ENCODE measurements at regions of chr2 and their contacts with region 1.

Region 1: DNA sequence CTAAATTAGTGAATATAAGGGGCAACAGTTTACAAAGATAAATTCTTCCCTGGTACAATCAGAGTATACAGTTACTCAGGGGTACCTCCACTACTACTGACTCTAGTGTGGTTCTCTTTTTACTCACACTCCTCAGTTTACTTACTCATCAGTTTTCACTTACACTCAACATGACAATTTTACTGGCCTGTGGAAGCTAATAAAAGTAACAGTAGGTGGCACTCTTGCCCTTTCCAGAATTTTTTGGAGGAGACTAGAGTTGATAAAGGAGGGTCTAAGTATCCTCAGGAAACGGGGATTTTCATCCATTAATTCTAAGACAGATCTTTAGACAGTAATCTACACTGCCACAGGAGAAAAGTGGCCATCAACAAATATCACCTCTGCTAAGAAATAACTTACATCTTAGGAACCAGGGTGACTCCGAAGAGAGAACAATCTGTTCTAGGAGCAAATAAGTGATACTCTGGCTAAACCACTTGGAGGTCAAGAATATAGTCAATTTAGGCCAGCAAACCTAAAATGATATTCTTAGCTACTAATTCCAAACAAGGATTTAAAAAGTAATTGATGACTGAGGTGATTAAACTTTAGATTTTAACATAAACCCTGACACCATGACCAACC is 61.3 kb downstream of the ATL2 start:
- DNase-seq: peak; percentile 23 to 55
- H3K4me3 ChIP-seq: no peak overlapping the region
- H3K27ac ChIP-seq: 0 out of 2 replicates have a peak overlapping the region, but pooled peaks have one; percentile 1
- H3K4me1 ChIP-seq: no peaks in the 10 kb centered on the region
- H3K27me3 ChIP-seq: no peaks in the 10 kb centered on the region
- CTCF ChIP-seq: peak; percentile 90

Region 2: DNA sequence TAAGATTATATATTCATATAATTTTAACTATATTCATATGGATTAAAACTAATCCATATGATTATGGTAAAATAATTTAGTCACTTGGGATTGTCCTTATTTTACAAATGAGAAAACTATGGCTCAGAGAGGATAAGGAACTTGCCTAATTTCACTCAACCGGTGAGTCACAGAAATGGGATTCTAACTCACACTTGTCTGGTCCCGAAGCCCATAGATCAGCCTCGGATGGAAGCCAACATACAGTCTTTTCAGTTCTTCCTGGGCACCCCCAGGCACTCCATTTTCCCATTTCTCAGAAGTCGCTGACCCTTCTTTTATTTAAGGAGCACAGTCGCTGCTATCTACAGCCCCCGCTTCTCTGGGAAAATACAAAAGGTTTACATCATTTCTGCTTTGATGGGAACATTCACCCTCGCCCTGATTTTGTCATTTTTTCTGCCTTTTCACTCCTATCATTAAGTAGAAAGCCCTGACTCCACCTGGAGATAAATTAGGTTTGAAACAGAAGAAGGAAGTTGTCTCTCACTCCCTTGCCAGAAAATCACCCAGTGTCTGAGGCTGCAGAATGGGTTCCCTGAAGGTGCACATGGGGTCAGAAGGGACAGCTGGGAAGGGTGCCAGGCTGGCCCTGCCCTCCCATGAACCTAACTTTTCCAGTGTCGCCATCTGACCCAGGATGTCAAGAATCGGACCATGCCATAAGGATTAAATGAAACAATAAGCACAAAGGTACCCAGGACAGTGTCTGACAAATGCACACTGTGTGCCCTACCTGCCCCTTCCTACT is 276.5 kb before region 1 on chr2:
- CTCF ChIA-PET with region 1: no interaction called
- POLR2A ChIA-PET with region 1: no interaction called
- intact Hi-C with region 1: no loop called
- DNase-seq: no peak
- H3K4me3 ChIP-seq: no peak overlapping the region
- H3K27ac ChIP-seq: no peak overlapping the region
- H3K4me1 ChIP-seq: peaks cover 5% of the 10 kb centered on the region; the same call in 1 of the 2 replicates
- H3K27me3 ChIP-seq: no peaks in the 10 kb centered on the region
- CTCF ChIP-seq: no peak

Region 3: GRCh38 chr2:38465789-38466127 is 149.9 kb after region 1 on chr2:
- CTCF ChIA-PET with region 1: interaction called, 6 read pairs
- POLR2A ChIA-PET with region 1: no interaction called
- intact Hi-C with region 1: loop called (anchors 1 kb)
- DNase-seq: peak in 1 of 2 experiments; percentile 32
- H3K4me3 ChIP-seq: no peak overlapping the region
- H3K27ac ChIP-seq: no peak overlapping the region
- H3K4me1 ChIP-seq: peaks cover 28% of the 10 kb centered on the region
- H3K27me3 ChIP-seq: no peaks in the 10 kb centered on the region
- CTCF ChIP-seq: peak; percentile 79

Region 4: GRCh38 chr2:38508311-38509039 is 192.7 kb after region 1 on chr2:
- CTCF ChIA-PET with region 1: interaction called, 10 read pairs
- POLR2A ChIA-PET with region 1: interaction called, 6 read pairs
- intact Hi-C with region 1: loop called (anchors 1 kb)
- DNase-seq: peak; percentile 69 to 78
- H3K4me3 ChIP-seq: no peak overlapping the region
- H3K27ac ChIP-seq: no peak overlapping the region
- H3K4me1 ChIP-seq: peaks cover 10% of the 10 kb centered on the region
- H3K27me3 ChIP-seq: no peaks in the 10 kb centered on the region
- CTCF ChIP-seq: peak; percentile 79

Region 5: DNA sequence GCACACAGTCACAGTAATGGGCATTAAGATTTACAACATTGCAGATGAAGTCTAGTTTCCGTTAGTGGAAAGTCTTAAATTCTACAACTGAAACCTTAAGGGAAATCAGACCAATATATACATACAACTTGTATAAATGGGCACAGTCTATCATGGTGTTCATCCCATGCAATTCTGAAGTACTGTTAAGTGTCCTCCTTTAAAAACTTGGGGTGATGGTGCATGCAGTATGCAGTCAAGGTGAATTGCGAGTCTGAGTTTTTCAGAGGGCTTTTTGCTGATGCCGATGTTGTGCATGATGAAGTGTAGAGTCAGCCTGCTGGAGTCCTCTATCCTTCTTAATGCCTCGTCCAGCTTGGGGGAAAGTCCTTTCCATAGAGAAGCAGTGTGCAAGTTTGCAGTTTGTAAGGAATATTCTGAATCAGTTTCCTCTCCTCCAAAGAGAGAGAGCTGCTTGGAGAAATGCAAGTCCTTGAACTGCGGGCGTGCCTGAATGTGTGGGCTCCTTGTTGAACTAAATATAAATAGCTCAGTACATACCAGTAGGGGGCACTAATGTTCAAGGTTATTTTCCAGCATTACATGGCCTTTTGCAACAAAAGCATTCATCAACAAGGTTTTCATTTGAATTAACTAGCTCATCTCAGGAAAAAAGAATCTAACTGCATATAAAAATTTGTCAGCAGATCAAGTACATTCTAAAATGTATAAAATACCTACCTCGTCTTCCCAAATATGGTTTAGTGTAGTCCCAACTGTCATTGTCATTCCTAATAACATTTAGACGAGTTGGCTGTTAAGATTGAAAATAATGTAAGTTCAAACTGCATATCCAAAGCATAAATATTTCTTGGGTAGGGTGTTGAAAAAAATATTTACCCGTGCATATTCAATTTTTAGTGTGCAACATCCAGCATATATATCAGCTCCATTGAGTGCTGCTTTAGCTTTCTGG is 265.6 kb after region 1 on chr2:
- CTCF ChIA-PET with region 1: interaction called, 6 read pairs
- POLR2A ChIA-PET with region 1: no interaction called
- intact Hi-C with region 1: loop called (anchors 1 kb)
- DNase-seq: peak in 1 of 2 experiments; percentile 56
- H3K4me3 ChIP-seq: no peak overlapping the region
- H3K27ac ChIP-seq: no peak overlapping the region
- H3K4me1 ChIP-seq: no peaks in the 10 kb centered on the region
- H3K27me3 ChIP-seq: no peaks in the 10 kb centered on the region
- CTCF ChIP-seq: peak; percentile 90

Region 6: DNA sequence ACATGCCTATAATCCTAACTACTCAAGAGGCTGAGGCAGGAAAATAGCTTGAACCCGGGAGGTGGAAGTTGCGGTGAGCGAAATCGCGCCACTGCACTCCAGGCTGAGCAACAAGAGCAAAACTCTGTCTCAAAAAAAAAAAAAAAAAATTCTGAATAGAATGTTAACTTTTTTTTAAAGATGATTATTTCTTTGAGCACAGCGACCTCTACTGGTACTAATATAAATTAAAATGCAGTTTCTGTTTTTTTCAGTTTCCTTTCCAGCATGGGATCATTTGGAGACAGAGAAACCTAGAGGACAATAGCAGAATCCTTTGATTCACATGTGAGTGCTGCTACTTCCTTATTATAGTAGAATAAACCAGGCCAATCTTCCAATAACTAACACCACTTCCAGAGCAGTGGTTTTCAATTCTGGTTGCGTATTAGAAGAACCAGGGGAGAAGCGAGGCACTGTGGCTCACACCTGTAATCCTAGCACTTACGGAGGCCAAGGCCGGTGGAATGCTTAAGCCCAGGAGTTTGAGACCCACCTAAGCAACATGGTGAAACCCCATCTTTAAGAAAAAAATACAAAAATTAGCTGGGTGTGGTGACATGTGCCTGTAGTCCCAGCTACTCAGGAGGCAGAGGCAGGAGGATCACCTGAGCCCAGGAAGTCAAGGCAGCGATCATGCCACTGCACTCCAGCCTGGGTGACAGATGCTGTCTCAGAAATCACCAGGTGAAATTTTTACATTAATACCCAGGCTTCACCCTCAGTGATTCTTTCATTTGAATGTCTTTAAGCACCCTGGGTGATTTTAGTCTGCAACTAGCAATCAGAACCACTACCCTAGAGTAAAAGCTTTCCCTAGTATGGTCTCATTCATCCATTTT is 425.3 kb after region 1 on chr2:
- CTCF ChIA-PET with region 1: no interaction called
- POLR2A ChIA-PET with region 1: no interaction called
- intact Hi-C with region 1: loop called (anchors 5 kb)
- DNase-seq: peak in 1 of 2 experiments; percentile 76
- H3K4me3 ChIP-seq: no peak overlapping the region
- H3K27ac ChIP-seq: 0 out of 2 replicates have a peak overlapping the region, but pooled peaks have one; percentile 2
- H3K4me1 ChIP-seq: no peaks in the 10 kb centered on the region
- H3K27me3 ChIP-seq: no peaks in the 10 kb centered on the region
- CTCF ChIP-seq: peak; percentile 85

Region 7: GRCh38 chr2:38875576-38876367 is 560.0 kb after region 1 on chr2 and contains the starts of genes DHX57 and MORN2:
- CTCF ChIA-PET with region 1: interaction called, 12 read pairs
- POLR2A ChIA-PET with region 1: no interaction called
- intact Hi-C with region 1: no loop called
- DNase-seq: peak; percentile 83
- H3K4me3 ChIP-seq: peak within 1 kb of the TSS; percentile 79
- H3K27ac ChIP-seq: peak within 1 kb of the TSS; percentile 26; the same call in 1 of the 2 replicates
- H3K4me1 ChIP-seq: peaks cover 11% of the 10 kb centered on the region
- H3K27me3 ChIP-seq: no peaks in the 10 kb centered on the region
- CTCF ChIP-seq: no peak
- total RNA-seq, gene DHX57: 20.8 and 28.1 TPM in 2 replicates
- total RNA-seq, gene MORN2: 16.7 and 22.9 TPM in 2 replicates

Measured in PC-9 (cell line).